ENCODE measurements at regions of chr16 and their contacts with region 1.

Region 1: GRCh38 chr16:31487720-31488467 is 5.0 kb downstream of the SLC5A2 start:
- DNase-seq: peak; percentile 79
- H3K4me3 Mint-ChIP-seq: peak overlapping the region; percentile 92
- H3K27ac Mint-ChIP-seq: peak overlapping the region; percentile 81
- H3K4me1 Mint-ChIP-seq: peaks cover 17% of the 10 kb centered on the region
- H3K27me3 Mint-ChIP-seq: no peaks in the 10 kb centered on the region
- CTCF ChIP-seq: no peak

Region 2: DNA sequence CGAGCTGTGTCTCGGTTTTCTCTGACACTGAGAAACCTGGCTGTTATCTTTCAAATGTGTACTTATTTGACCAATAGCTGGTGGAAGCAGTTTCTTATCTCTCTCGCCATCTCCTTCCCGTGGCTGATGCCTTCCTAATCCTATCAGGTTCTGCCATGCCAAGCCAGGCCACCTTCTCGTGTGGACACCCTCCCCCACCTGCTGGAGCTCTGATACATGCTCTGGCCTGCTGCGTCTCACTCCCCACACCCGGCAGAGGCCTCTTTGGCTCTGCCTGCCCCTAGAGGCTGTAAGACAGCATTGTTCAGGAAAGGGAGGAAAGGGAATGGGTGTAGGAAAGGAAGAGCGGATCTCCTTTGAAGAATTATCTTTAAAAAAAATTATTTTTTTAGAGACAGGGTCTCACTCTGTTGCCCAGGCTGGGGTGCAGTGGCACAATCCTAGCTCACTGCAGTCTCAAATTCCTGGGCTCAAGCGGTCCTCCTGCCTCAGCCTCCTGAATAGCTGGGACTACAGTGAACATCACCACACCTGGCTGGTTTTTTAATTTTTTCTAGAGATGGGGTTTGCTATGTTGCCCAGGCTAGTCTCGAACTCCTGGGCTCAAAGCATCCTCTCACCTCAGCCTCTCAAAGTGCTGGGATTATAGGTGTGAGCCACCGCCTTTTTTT is 36.1 kb before region 1 on chr16:
- CTCF ChIA-PET with region 1: no interaction called
- intact Hi-C with region 1: loop called (anchors 5 kb)
- DNase-seq: peak; percentile 83
- H3K4me3 Mint-ChIP-seq: no peak overlapping the region
- H3K27ac Mint-ChIP-seq: peak overlapping the region; percentile 10
- H3K4me1 Mint-ChIP-seq: peaks cover 21% of the 10 kb centered on the region
- H3K27me3 Mint-ChIP-seq: no peaks in the 10 kb centered on the region
- CTCF ChIP-seq: peak; percentile 81

Region 3: DNA sequence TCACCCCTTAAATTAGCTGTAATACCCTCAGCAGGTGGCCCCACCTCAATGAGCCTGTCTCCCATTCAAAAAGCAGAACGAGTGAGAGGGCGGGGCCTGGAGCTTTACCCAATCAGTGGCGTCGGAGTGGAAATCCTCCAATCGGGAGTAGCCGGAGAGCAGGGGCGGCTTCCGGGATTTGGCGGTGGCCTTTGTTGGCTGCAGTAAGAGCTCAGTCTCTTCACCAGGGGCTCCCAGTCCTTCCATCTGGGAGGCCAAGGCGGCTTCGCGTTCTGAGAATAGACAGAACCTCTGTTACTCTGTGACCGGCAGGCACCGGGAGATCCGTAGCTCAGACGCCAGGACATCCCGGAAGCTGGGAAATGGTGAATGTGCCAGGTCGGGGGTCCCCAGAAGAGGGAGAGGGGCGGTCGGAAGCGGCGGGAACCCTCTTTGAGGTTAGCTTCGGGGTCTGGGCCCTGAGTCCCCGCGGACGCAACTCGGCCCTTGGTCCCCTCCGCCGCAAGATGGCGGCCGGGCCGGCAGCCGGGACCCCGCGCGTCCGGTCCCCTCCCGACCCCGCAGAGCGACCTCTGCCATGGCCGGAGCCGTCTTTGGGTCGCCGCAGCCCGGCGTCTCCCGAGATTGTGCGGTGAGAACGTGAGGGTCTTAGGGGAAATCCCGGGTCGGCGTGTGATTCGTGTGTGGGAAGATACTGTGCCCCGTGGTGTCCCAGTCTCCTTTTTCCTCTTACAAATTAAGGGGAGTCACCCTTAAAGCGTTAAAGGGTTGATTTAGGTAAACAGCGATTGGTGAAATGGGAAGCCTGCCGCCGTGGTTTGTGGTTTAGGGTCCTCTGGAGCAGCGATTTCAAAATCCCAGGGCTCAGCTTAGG is 225.4 kb after region 1 on chr16:
- CTCF ChIA-PET with region 1: no interaction called
- intact Hi-C with region 1: loop called (anchors 5 kb)
- DNase-seq: peak; percentile 94
- H3K4me3 Mint-ChIP-seq: peak overlapping the region; percentile 93
- H3K27ac Mint-ChIP-seq: peak overlapping the region; percentile 97
- H3K4me1 Mint-ChIP-seq: peaks cover 14% of the 10 kb centered on the region
- H3K27me3 Mint-ChIP-seq: no peaks in the 10 kb centered on the region
- CTCF ChIP-seq: no peak

Measured in Calu3 (cell line).